ENCODE measurements at regions of chr5 and their contacts with region 1.

Region 1: DNA sequence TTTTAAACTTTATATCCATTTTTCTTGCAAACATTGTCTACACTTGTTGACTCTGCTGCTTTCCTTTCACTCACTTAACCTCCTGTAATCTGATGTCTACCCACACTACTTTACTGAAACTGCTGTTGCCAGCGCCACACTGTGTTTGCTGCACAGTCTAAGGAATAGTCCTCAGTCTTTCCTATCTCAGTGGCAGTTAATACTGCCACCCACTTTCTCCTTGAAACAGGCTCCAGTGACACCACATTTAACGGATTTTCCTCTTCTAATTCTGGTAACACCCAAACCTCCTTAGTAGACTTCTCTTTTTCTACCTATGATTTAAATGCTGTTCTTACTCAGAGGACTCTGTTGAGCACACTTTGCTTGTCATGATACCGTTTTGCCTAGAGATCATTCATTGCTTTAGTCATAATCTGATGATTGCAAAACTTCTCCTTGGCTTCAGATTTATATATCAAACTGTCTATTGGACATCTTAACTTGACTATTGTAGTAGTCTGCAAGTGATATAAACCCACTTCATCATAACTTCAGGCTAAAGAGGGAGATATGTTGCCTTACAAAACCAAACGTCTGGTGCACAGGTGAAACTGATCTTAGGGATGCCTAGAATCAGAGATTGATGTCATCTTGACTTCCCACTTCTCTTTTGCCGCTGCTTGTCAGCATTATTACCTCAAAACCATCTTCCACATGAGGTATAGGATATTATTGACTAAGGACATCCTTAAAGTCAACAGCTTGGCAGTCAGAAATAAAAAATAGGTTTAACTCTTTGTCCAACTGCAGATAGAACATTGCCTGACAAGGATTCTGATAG is 94.1 kb downstream of the CDC42SE2 start:
- DNase-seq: peak in 2 of 5 donors; percentile 39 to 44
- H3K4me3 ChIP-seq: no peak overlapping the region
- H3K4me3 Mint-ChIP-seq: peak overlapping the region; percentile 6 to 70 (median 63)
- H3K27ac ChIP-seq: peak overlapping the region; percentile 45
- H3K27ac Mint-ChIP-seq: peak overlapping the region; percentile 66 to 92 (median 90)
- H3K4me1 ChIP-seq: peaks cover 85% of the 10 kb centered on the region
- H3K4me1 Mint-ChIP-seq: peaks cover 49 to 76% (median 66%) of the 10 kb centered on the region in 4 donors
- H3K27me3 ChIP-seq: no peaks in the 10 kb centered on the region
- H3K27me3 Mint-ChIP-seq: no peaks in the 10 kb centered on the region

Region 2: GRCh38 chr5:131281133-131281867 is 76.7 kb before region 1 on chr5:
- CTCF ChIA-PET with region 1: interaction called, 3 read pairs
- POLR2A ChIA-PET with region 1: interaction called, 14 read pairs
- intact Hi-C with region 1: no loop called
- DNase-seq: peak; percentile 57 to 89 (median 85)
- H3K4me3 ChIP-seq: peak overlapping the region; percentile 0 to 37
- H3K4me3 Mint-ChIP-seq: peak overlapping the region; percentile 57 to 90 (median 82)
- H3K27ac ChIP-seq: peak overlapping the region; percentile 63
- H3K27ac Mint-ChIP-seq: peak overlapping the region; percentile 71 to 95 (median 87)
- H3K4me1 ChIP-seq: peaks cover 89% of the 10 kb centered on the region
- H3K4me1 Mint-ChIP-seq: peaks cover 54 to 89% (median 73%) of the 10 kb centered on the region in 4 donors
- H3K27me3 ChIP-seq: no peaks in the 10 kb centered on the region
- H3K27me3 Mint-ChIP-seq: no peaks in the 10 kb centered on the region

Region 3: GRCh38 chr5:131338051-131338453 is 19.9 kb before region 1 on chr5:
- CTCF ChIA-PET with region 1: interaction called, 3 read pairs
- POLR2A ChIA-PET with region 1: interaction called, 19 read pairs
- intact Hi-C with region 1: loop called (anchors 2 kb)
- DNase-seq: no peak
- H3K4me3 ChIP-seq: no peak overlapping the region
- H3K4me3 Mint-ChIP-seq: peak overlapping the region in 7 of 8 donors; percentile 36 to 84 (median 70)
- H3K27ac ChIP-seq: peak overlapping the region; percentile 52
- H3K27ac Mint-ChIP-seq: peak overlapping the region; percentile 63 to 97 (median 94)
- H3K4me1 ChIP-seq: peaks cover 58% of the 10 kb centered on the region
- H3K4me1 Mint-ChIP-seq: peaks cover 62 to 95% (median 80%) of the 10 kb centered on the region in 4 donors
- H3K27me3 ChIP-seq: no peaks in the 10 kb centered on the region
- H3K27me3 Mint-ChIP-seq: no peaks in the 10 kb centered on the region

Region 4: GRCh38 chr5:131375351-131375750 is 17.4 kb after region 1 on chr5:
- CTCF ChIA-PET with region 1: interaction called, 16 read pairs
- POLR2A ChIA-PET with region 1: interaction called, 36 read pairs
- intact Hi-C with region 1: loop called (anchors 2 kb)
- DNase-seq: peak in 4 of 5 donors; percentile 41 to 76 (median 48)
- H3K4me3 ChIP-seq: no peak overlapping the region
- H3K4me3 Mint-ChIP-seq: peak overlapping the region; percentile 11 to 74 (median 44)
- H3K27ac ChIP-seq: peak overlapping the region; percentile 66
- H3K27ac Mint-ChIP-seq: peak overlapping the region; percentile 89 to 99 (median 97)
- H3K4me1 ChIP-seq: peaks cover 100% of the 10 kb centered on the region
- H3K4me1 Mint-ChIP-seq: peaks cover 64 to 96% (median 82%) of the 10 kb centered on the region in 4 donors
- H3K27me3 ChIP-seq: no peaks in the 10 kb centered on the region
- H3K27me3 Mint-ChIP-seq: no peaks in the 10 kb centered on the region

Measured in CD4-positive, alpha-beta memory T cell (primary cell).